Activated CD4-positive, alpha-beta memory T cell treated with anti-CD3 and anti-CD28 coated beads for 36 hours (primary cell): ENCODE measurements at regions of chr3 and their contacts with region 1.

Region 1: GRCh38 chr3:36957862-36958686 is 13.2 kb upstream of the TRANK1 start:
- DNase-seq: peak; percentile 18
- H3K4me3 Mint-ChIP-seq: no peak overlapping the region
- H3K27ac Mint-ChIP-seq: no peak overlapping the region
- H3K4me1 Mint-ChIP-seq: peaks cover 10% of the 10 kb centered on the region
- H3K27me3 Mint-ChIP-seq: no peaks in the 10 kb centered on the region

Region 2: GRCh38 chr3:36792342-36792741 is 165.7 kb before region 1 on chr3:
- CTCF ChIA-PET with region 1: interaction called, 23 read pairs
- POLR2A ChIA-PET with region 1: no interaction called
- intact Hi-C with region 1: no loop called
- DNase-seq: peak; percentile 33
- H3K4me3 Mint-ChIP-seq: no peak overlapping the region
- H3K27ac Mint-ChIP-seq: no peak overlapping the region
- H3K4me1 Mint-ChIP-seq: no peaks in the 10 kb centered on the region
- H3K27me3 Mint-ChIP-seq: no peaks in the 10 kb centered on the region

Region 3: GRCh38 chr3:36852071-36852470 is 106.0 kb before region 1 on chr3:
- CTCF ChIA-PET with region 1: interaction called, 11 read pairs
- POLR2A ChIA-PET with region 1: no interaction called
- intact Hi-C with region 1: no loop called
- DNase-seq: no peak
- H3K4me3 Mint-ChIP-seq: no peak overlapping the region
- H3K27ac Mint-ChIP-seq: no peak overlapping the region
- H3K4me1 Mint-ChIP-seq: no peaks in the 10 kb centered on the region
- H3K27me3 Mint-ChIP-seq: no peaks in the 10 kb centered on the region

Region 4: DNA sequence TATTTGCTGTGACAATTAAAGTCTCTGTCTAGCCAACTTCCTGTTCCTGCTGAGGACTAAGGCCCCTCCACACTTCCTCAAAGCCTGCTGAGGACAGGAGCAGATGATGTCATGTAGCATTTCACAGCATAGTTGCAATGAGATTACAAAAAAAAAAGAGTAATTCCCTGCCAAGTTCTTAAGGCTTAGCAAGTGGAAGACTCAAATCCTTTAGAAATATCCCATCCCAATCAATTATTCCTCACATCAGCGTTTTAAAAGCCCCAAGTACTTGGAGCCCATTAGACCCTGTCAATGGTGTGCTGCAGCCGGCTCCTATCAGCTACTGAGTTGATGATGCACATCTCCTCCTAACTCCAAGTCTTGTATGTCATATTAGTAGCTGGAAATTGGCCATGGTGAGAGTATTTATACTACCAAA is 64.9 kb before region 1 on chr3:
- CTCF ChIA-PET with region 1: interaction called, 23 read pairs
- POLR2A ChIA-PET with region 1: no interaction called
- intact Hi-C with region 1: no loop called
- DNase-seq: no peak
- H3K4me3 Mint-ChIP-seq: no peak overlapping the region
- H3K27ac Mint-ChIP-seq: peak overlapping the region; percentile 74
- H3K4me1 Mint-ChIP-seq: peaks cover 46% of the 10 kb centered on the region
- H3K27me3 Mint-ChIP-seq: no peaks in the 10 kb centered on the region

Region 5: DNA sequence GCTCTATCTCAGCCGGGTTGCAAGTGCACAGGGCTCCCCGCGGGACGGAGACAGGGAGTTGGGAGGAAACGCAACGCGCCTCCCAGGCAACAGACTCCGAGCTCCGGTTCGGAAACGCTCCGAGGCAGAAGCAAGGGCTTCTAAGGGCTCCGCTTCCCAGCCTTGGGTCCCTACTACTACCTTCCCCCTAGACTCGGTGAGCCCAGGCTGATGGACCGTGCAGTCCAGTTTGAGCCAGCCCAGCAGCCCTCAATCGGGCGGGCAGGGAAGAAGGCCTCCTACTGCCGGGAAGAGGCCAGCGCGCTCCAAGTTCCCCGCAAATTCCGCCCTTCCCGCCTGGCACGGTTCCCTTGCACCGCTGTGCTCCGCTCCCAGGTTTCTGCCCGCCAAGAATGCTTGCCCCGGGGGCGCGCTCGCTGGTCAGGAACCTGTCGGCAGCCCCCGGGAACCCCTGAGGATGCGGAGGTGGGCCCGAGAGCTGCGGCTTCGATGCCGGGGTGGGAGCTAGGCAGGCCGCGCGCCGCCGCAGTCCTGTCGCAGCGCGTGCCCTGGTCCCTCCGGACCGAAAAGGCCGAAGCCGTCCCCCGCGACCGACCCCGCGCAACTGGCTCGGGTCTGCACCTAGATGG is 13.9 kb before region 1 on chr3:
- CTCF ChIA-PET with region 1: interaction called, 39 read pairs
- POLR2A ChIA-PET with region 1: no interaction called
- intact Hi-C with region 1: loop called (anchors 2 kb)
- DNase-seq: peak; percentile 50
- H3K4me3 Mint-ChIP-seq: peak overlapping the region; percentile 80
- H3K27ac Mint-ChIP-seq: no peak overlapping the region
- H3K4me1 Mint-ChIP-seq: peaks cover 16% of the 10 kb centered on the region
- H3K27me3 Mint-ChIP-seq: no peaks in the 10 kb centered on the region

Region 6: DNA sequence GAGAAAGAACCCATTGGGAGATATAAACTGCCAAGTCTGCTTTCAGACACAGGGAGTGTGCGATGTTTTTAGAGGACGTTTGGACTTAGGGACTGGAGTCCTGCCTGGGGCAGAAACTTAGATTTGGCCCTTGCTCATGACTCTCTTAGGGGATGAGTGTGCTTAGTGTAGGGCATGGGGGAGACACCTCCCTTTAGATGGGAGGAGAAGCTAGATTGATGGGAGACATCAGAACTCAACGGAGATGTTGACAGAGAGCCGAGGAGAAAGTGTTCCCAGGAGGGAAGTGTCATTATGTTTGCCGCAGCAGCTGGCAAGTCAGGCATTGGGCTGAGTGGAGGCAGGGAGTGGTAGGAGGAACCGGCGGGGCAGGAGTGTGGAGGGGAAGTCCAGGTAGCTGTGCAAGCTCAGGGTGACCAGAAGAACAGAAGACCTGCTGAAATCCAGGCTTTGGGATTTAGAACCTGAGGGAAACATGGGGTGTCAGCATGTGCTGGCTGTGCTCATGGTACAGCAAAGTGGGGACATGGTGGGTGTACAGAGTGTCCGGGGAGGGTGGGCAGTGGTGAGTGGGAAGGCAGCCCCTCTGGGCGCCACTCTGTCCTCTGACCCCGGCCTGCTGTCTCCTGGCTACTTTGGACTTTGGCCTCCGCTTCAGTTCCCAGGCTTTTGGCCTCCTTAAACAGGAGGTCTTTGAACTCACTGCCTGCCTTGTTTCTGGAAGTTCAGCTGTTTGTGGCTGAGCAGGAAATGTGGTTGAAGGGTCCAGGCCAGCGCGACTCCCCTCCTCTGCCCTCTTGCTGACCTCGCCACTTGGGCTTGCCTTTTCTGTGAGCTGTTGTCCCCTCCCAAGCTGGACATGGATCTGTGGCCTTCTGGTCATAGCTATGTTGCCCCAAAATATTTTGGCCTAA is 540.3 kb after region 1 on chr3:
- CTCF ChIA-PET with region 1: no interaction called
- POLR2A ChIA-PET with region 1: no interaction called
- intact Hi-C with region 1: no loop called
- DNase-seq: no peak
- H3K4me3 Mint-ChIP-seq: no peak overlapping the region
- H3K27ac Mint-ChIP-seq: no peak overlapping the region
- H3K4me1 Mint-ChIP-seq: no peaks in the 10 kb centered on the region
- H3K27me3 Mint-ChIP-seq: peaks cover 17% of the 10 kb centered on the region